K562 (cell line): ENCODE measurements at regions of chrX and their contacts with region 1.

Region 1: DNA sequence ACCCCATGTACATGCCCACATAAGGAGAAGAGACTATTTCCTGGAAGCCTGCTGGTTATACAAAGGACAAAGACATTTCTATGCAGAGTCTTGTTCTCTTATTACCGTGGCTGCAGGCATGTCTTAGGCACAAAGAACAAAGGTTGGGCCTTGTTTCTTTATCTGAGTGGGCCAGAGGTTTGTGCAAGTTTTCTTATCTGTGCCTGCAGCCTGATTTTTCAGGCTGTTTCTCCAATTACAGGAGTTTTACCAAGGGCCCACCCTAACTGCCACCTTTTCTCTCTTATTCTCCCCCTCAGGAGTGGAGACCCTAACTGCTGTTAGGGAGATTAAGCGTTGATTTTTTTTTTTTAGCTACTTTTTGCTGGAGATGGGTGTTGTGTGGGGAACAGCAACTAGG is 3.5 kb downstream of the TENT5D start:
- DNase-seq: peak; percentile 28 to 80 (median 40)
- ATAC-seq: peak; percentile 87
- H3K4me3 ChIP-seq: no peak overlapping the region
- H3K27ac ChIP-seq: peak overlapping the region; percentile 79
- H3K4me1 ChIP-seq: peaks cover 0 to 12% of the 10 kb centered on the region in 2 experiments; a peak in 4 of 5 replicates
- H3K27me3 ChIP-seq: no peaks in the 10 kb centered on the region
- CTCF ChIP-seq: no peak
- EP300 ChIP-seq: peak; percentile 96
- POLR2A ChIP-seq: no peak
- RAD21 ChIP-seq: no peak

Region 2: DNA sequence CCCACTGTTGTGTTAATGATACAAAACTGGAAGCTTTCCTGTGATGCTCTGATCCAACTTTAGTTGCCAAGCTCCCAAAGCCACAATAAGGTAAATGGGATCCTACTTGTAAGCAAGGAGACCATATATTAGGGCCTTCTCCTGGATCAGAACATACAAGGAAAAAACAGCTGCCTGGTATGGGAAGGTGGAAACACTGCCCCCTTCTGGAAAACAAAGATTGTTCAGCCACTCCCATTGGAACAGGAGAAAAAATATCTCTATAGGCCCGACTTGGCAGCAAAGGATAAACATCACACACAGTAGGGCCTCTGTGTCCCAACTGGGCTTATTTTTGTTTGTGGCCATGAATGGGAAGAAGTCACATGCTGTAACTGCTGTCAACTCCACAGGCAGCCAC is 242.7 kb before region 1 on chrX:
- CTCF ChIA-PET with region 1: no interaction called
- POLR2A ChIA-PET with region 1: no interaction called
- in situ Hi-C with region 1: no loop called
- intact Hi-C with region 1: no loop called
- DNase-seq: peak in 2 of 4 experiments; percentile 7
- ATAC-seq: no peak
- H3K4me3 ChIP-seq: no peak overlapping the region
- H3K27ac ChIP-seq: no peak overlapping the region
- H3K4me1 ChIP-seq: no peaks in the 10 kb centered on the region
- H3K27me3 ChIP-seq: no peaks in the 10 kb centered on the region
- CTCF ChIP-seq: peak; percentile 11 to 32 (median 21); a peak in 2 of 6 replicates
- EP300 ChIP-seq: no peak
- POLR2A ChIP-seq: no peak
- RAD21 ChIP-seq: peak in 1 of 2 experiments; percentile 18; a peak in 1 of 4 replicates

Region 3: DNA sequence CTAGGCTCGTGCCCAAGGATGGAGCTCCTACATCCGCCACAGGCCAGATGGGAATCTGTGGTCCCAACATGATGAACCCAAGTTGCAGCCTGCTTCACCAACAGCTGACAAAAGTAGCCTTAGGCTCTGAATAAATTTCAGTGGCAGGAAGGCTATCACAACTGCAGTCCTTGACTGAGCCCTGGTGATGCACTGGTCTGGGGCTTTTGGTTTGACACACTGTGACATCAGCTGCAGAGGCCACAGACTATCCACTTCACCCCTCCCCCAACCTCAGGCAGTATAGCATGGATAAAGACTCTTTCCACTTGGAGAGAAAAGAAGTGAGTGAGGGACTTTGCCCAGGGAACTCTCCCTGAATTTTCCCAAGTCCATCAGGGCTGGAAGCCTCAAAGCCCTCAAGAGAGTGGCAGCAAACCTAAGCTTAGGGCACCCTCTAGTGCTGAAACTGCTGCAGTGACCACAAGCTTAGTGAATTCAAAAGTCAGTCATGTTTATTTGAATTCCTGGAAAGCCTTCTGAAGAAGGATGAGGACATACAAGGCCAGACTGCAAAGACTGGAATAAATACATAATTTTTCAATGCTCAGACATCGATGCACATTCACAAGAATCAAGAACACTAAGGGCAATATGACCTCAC is 138.5 kb before region 1 on chrX:
- CTCF ChIA-PET with region 1: no interaction called
- POLR2A ChIA-PET with region 1: no interaction called
- in situ Hi-C with region 1: no loop called
- intact Hi-C with region 1: loop called (anchors 5 kb)
- DNase-seq: peak in 3 of 4 experiments; percentile 4 to 38 (median 6)
- ATAC-seq: peak; percentile 85
- H3K4me3 ChIP-seq: no peak overlapping the region
- H3K27ac ChIP-seq: no peak overlapping the region
- H3K4me1 ChIP-seq: no peaks in the 10 kb centered on the region
- H3K27me3 ChIP-seq: no peaks in the 10 kb centered on the region
- CTCF ChIP-seq: peak; percentile 36 to 48 (median 41); a peak in 4 of 6 replicates
- EP300 ChIP-seq: no peak
- POLR2A ChIP-seq: no peak
- RAD21 ChIP-seq: peak in 1 of 2 experiments; percentile 45; a peak in 1 of 4 replicates

Region 4: DNA sequence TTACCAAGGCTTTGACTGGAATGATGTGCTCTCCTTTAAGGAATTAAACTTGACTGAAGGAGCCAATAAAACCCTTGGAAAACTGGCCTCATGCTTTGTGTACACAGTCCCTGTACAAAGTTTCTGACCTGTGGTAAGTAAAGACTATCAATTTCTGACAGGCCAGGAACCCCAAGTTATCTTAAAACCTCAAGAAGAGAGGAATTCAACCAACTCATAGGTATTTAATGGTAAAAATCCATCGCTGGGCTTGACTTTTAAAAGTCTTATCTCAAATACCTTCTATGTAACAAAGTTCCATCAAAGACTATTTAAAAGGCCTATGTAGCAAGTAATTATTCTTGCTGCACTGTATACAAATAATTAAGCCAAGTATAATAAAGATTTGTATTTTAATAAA is 107.2 kb before region 1 on chrX:
- CTCF ChIA-PET with region 1: no interaction called
- POLR2A ChIA-PET with region 1: no interaction called
- in situ Hi-C with region 1: no loop called
- intact Hi-C with region 1: loop called (anchors 10 kb)
- DNase-seq: peak in 1 of 4 experiments; percentile 29
- ATAC-seq: no peak
- H3K4me3 ChIP-seq: no peak overlapping the region
- H3K27ac ChIP-seq: no peak overlapping the region
- H3K4me1 ChIP-seq: no peaks in the 10 kb centered on the region
- H3K27me3 ChIP-seq: no peaks in the 10 kb centered on the region
- CTCF ChIP-seq: no peak
- EP300 ChIP-seq: no peak
- POLR2A ChIP-seq: no peak
- RAD21 ChIP-seq: no peak

Region 5: GRCh38 chrX:80511969-80512760 is 88.4 kb after region 1 on chrX:
- CTCF ChIA-PET with region 1: no interaction called
- POLR2A ChIA-PET with region 1: no interaction called
- in situ Hi-C with region 1: no loop called
- intact Hi-C with region 1: loop called (anchors 1 kb)
- DNase-seq: peak; percentile 36 to 87 (median 54)
- ATAC-seq: peak; percentile 95
- H3K4me3 ChIP-seq: no peak overlapping the region
- H3K27ac ChIP-seq: peak overlapping the region; percentile 86
- H3K4me1 ChIP-seq: peaks cover 0 to 8% of the 10 kb centered on the region in 2 experiments; a peak in 3 of 5 replicates
- H3K27me3 ChIP-seq: no peaks in the 10 kb centered on the region
- CTCF ChIP-seq: no peak
- EP300 ChIP-seq: peak; percentile 88
- POLR2A ChIP-seq: no peak
- RAD21 ChIP-seq: peak in 1 of 2 experiments; percentile 12; a peak in 1 of 4 replicates